ENCODE measurements at regions of chr10 and their contacts with region 1.

Region 1: DNA sequence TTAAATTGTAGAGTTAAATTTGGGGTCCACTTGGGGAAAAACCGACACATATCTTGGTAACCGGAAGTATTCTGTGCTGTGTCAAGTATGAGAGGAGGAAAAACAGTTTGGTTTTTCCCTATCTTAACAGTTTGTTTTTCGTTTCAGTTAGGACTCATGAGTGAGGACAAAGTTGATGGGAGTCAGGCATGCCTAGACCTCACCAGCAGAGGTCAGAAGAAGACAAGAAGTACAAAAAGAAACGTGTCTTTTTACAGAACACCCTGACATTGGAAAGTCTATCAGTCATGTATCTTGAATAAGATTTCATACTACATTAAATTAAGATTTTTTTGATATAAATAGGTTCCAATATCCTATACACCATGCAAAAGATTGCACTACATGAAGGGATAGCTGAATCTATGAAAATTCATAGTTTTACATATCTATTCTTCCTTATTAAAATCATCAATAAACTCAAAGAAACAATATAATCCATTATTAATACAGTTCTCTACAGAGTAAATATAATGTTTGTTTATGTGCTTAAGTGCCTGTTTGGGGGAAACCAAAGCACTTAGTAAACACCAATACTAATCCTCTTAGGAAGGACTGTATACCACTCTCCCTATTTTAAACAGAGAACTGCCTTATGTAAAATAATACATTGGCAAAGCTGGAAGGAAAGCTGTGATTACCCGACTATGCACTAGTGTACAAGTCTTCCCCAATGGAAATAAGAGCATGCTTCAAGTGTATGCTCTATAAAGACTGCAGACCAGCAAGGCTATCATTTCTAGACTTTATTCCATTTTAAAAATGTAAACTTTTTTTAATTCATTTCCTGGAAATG is 95.6 kb downstream of the USP6NL start:
- DNase-seq: no peak
- H3K4me3 ChIP-seq: no peak overlapping the region
- CTCF ChIP-seq: peak; percentile 70

Region 2: GRCh38 chr10:11353006-11353896 is 162.6 kb before region 1 on chr10:
- CTCF ChIA-PET with region 1: no interaction called
- POLR2A ChIA-PET with region 1: no interaction called
- DNase-seq: no peak
- H3K4me3 ChIP-seq: no peak overlapping the region
- CTCF ChIP-seq: no peak

Region 3: DNA sequence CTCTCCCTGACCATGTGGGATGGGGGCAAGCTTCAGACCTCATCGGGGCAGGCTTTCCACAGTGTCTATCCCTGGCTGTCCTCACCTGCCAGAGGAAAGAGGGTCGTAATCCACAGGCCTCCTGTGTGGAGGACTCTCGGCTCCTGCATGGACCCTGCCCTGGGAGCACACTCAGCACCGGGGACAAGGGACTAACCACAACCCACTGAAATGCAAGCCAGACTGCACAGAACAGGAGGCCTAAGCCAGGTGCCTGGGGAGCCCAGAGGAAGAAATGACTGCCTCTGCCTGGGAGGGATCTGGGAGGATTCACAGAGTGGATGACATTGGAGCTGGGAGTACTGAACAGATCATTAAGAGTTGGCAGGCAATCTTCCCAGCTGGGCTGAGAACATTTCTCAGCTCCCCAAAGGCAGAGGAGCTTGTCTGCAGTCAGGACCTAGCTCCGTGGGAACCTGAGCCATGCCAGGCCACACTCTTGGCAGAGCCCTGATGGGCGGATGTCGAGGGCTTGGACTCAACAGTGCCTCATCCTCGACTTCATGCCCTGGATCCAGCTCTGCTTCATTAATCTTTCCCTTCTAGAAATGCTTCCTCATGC is 117.7 kb before region 1 on chr10:
- CTCF ChIA-PET with region 1: no interaction called
- POLR2A ChIA-PET with region 1: no interaction called
- DNase-seq: no peak
- H3K4me3 ChIP-seq: no peak overlapping the region
- CTCF ChIP-seq: no peak

Region 4: DNA sequence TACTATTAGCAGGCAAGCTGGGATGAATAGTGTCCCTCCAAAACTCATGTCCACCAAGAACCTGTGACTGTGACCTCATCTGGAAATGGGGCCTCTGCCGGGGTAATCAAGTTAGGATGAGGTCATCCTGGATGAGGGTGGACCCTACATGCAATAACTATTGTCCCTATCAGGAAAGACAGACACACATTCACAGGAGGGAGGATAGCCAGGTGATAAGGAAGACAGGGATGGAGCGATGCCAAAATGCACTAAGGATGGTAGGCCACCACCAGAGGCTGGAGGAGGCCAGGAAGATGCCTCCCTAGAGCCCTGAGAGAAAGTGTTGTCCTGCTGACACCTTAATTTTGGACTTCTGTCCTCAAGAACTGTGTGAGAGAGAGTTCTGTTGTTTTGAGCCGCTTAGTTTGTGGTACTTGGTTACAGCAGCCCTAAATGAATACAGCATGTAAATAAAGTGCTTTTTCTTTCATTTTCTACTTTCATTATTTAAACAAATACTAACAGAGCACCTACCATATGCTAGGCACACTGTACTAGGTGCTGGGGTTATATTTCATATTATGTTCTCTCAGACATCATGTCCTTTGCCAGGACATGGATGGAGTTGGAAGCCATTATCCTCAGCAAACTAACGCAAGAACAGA is 16.3 kb before region 1 on chr10:
- CTCF ChIA-PET with region 1: interaction called, 22 read pairs
- POLR2A ChIA-PET with region 1: no interaction called
- DNase-seq: no peak
- H3K4me3 ChIP-seq: no peak overlapping the region
- CTCF ChIP-seq: no peak

Region 5: GRCh38 chr10:11505639-11506038 is 10.2 kb before region 1 on chr10:
- CTCF ChIA-PET with region 1: interaction called, 22 read pairs
- POLR2A ChIA-PET with region 1: no interaction called
- DNase-seq: no peak
- H3K4me3 ChIP-seq: no peak overlapping the region
- CTCF ChIP-seq: no peak

Region 6: DNA sequence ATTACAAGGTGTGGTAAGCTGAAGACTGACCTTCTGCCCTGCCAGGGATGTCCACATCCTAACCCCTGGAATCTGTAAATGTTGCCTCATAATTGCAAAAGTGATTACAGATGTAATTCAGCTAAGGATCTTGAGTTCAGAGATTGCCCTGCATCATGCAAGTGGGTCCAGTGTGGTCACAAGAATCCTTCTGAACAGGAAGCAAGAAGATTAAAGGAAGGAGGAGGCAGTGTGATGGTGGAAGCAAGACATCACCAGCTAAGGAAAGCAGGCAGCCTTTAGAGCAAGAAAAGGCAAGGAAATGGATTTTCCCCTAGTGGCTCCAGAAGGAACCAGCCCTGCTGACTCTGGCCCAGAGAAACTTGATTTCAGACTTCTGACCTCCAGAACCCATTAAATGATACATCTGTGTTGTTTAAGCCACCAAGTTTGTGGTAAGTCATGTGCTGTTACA is 17.5 kb after region 1 on chr10:
- CTCF ChIA-PET with region 1: interaction called, 10 read pairs
- POLR2A ChIA-PET with region 1: no interaction called
- DNase-seq: no peak
- H3K4me3 ChIP-seq: no peak overlapping the region
- CTCF ChIP-seq: peak; percentile 12

Region 7: DNA sequence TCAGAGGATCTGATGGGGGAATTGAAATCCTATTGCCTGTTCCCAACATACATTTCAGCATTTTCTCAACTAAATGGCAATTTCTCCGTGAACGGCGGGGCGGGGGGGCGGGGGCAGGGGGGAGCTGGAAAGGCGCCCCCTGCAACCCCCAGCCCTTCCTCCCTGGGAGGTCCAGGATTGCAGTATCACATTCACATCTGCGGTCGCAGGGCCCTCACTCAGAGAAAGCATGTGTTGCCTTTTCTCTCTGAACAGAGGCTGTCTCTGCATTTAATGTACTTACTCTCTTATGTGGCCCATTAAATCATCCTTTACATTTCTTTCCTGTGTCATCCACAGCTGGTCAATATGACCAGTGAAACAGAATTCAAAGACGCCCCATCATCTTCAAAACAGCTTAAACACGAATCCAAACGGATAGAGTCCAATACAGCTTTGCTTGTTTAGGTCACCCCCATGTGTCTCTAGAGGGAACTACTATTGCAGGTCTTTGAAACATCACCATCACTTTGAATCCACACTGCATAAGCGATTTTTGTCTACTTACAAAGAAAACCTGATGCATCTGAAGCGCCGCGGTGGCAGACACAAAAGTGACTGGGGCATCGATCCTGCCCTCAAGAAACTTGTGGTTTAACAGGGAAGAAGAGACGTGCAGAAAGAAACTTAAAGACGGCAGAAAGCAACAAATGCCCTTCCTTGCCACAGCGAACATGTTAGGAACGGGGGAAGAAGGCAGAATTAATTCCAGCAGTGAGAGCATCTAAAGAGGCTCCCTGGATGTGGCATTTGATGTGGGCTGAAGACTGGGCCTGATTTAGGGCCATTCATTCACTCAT is 209.3 kb after region 1 on chr10:
- CTCF ChIA-PET with region 1: interaction called, 125 read pairs
- POLR2A ChIA-PET with region 1: no interaction called
- DNase-seq: peak; percentile 34
- H3K4me3 ChIP-seq: peak overlapping the region; percentile 15; the same call in 1 of the 2 replicates
- CTCF ChIP-seq: peak; percentile 70

Region 8: GRCh38 chr10:11730779-11731178 is 215.0 kb after region 1 on chr10:
- CTCF ChIA-PET with region 1: interaction called, 125 read pairs
- POLR2A ChIA-PET with region 1: no interaction called
- DNase-seq: no peak
- H3K4me3 ChIP-seq: no peak overlapping the region
- CTCF ChIP-seq: no peak

Region 9: GRCh38 chr10:11757821-11758463 is 242.1 kb after region 1 on chr10:
- CTCF ChIA-PET with region 1: interaction called, 198 read pairs
- POLR2A ChIA-PET with region 1: no interaction called
- DNase-seq: no peak
- H3K4me3 ChIP-seq: no peak overlapping the region
- CTCF ChIP-seq: peak; percentile 92

Measured in AG04449 (cell line).